ENCODE measurements at regions of chr1 and their contacts with region 1.

Region 1: DNA sequence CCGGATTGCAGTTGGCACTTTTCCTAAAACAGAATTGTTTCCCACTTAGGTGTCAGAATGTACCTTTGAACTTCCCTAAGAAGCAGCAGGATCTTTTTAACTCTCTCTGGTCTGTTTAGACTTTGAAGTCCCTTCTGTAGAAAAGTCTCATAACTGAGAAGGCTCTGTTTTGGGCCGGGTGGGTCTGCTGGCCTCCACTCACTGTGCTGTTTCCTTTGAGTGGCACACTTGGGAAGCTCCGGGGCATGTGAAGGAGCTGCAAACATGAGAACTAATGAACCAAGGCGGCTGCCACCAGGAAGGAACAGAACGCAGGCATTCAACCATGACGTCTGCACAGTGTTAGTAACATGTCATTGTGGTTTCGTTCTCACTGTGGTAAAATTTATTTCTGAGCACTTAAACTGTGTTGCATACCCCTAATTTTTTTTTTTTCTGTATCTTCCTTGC is 19.5 kb upstream of the NCMAP start:
- DNase-seq: peak; percentile 81
- ATAC-seq: peak; percentile 52
- H3K4me3 Mint-ChIP-seq: peak overlapping the region; percentile 76
- H3K27ac Mint-ChIP-seq: peak overlapping the region; percentile 99
- H3K4me1 Mint-ChIP-seq: peaks cover 85% of the 10 kb centered on the region
- H3K27me3 Mint-ChIP-seq: no peaks in the 10 kb centered on the region

Region 2: DNA sequence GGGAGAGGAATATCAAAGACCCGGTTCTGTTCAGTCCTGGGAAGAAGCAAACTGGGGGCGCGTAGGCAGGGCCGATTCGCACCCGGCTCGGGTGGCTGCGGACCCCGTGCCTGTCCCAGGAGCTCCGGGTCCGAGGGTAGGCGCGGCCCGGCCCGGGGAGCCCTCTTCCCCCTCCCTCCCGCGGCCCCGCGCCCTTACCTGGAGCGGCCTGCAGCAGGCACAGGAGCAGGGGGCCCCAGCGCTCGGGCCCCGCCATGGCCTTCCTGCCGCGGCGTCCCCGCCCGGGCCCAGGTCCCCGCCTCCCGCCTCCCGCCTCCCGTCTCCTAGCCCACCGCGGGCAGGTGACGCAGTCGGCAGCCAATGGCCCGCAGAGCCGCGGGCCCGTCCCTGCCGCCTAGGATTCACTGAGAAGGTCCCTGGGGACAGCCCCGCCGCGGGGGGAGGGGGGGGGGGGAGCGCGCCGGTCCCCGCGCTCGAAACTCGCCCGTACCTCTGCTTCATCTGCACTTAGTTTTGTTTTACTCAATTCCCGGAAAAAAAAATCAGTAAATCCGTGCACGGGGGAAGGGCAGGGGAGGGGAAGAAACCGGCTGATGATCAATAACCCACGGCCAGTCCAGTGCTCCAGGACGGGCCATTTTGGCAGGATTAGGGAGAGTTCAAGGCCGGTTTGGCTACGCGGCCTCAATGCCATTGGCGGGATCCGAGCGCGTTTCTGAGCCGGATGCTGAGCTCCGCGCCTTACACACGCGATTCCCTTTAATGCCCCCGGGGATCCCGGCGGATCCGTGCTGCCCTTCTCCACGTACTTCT is 349.2 kb before region 1 on chr1 and contains the start of gene IFNLR1:
- CTCF ChIA-PET with region 1: no interaction called
- POLR2A ChIA-PET with region 1: no interaction called
- intact Hi-C with region 1: loop called (anchors 1 to 5 kb)
- DNase-seq: peak; percentile 93
- ATAC-seq: peak; percentile 88
- H3K4me3 Mint-ChIP-seq: peak within 1 kb of the TSS; percentile 73
- H3K27ac Mint-ChIP-seq: peak within 1 kb of the TSS; percentile 71
- H3K4me1 Mint-ChIP-seq: peaks cover 47% of the 10 kb centered on the region
- H3K27me3 Mint-ChIP-seq: no peaks in the 10 kb centered on the region
- total RNA-seq, gene IFNLR1: 6.6 to 7.4 TPM

Region 3: DNA sequence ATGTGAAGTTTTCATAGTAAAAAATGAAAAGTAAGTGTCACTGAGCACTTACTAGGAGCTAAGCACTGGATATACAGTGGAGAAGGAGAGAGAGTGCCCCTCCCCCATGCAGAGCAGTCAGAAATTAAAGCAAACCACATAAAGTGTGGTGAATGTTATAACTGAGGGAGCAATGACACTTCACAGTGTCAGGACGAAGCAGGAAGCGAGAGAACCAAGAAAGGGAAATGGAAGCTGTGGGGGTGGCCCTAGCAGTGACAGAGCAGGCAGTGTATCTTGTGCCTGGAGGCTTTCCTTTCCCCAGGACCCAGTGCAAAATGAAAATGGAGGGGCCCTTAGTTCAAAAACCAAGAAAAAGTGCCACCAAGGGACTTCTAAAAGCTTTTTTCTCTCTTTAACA is 55.3 kb before region 1 on chr1:
- CTCF ChIA-PET with region 1: interaction called, 9 read pairs
- POLR2A ChIA-PET with region 1: interaction called, 7 read pairs
- intact Hi-C with region 1: loop called (anchors 1 to 2 kb)
- DNase-seq: peak; percentile 81
- ATAC-seq: peak; percentile 76
- H3K4me3 Mint-ChIP-seq: peak overlapping the region; percentile 60
- H3K27ac Mint-ChIP-seq: peak overlapping the region; percentile 97
- H3K4me1 Mint-ChIP-seq: peaks cover 65% of the 10 kb centered on the region
- H3K27me3 Mint-ChIP-seq: no peaks in the 10 kb centered on the region

Region 4: DNA sequence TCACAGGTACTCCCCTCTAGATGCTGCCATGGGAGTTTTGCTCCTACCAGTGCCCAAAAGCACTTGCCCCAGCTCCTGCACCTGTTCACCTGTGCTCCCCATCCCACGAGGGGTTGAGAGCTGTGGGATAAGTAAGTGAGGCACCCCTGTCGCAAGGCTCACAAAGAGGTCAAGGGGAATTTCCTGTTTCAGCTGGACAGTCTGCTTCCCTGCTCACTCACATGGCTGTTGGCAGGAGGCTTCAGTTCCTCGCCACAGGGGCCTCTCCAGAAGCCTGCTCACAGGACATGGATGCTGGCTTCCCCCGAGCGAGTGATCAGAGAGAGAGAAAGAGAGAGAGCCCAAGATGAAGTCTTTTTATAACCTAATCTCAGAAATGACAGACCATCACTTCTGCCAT is 10.8 kb after region 1 on chr1:
- CTCF ChIA-PET with region 1: interaction called, 3 read pairs
- POLR2A ChIA-PET with region 1: interaction called, 14 read pairs
- intact Hi-C with region 1: no loop called
- DNase-seq: no peak
- ATAC-seq: no peak
- H3K4me3 Mint-ChIP-seq: no peak overlapping the region
- H3K27ac Mint-ChIP-seq: no peak overlapping the region
- H3K4me1 Mint-ChIP-seq: peaks cover 24% of the 10 kb centered on the region
- H3K27me3 Mint-ChIP-seq: no peaks in the 10 kb centered on the region

Region 5: GRCh38 chr1:24919791-24920532 is 383.5 kb after region 1 on chr1:
- CTCF ChIA-PET with region 1: no interaction called
- POLR2A ChIA-PET with region 1: no interaction called
- intact Hi-C with region 1: loop called in 1 of 2 experiments (anchors 5 kb)
- DNase-seq: peak; percentile 90
- ATAC-seq: peak; percentile 38
- H3K4me3 Mint-ChIP-seq: peak overlapping the region; percentile 54
- H3K27ac Mint-ChIP-seq: peak overlapping the region; percentile 97
- H3K4me1 Mint-ChIP-seq: peaks cover 69% of the 10 kb centered on the region
- H3K27me3 Mint-ChIP-seq: no peaks in the 10 kb centered on the region

Region 6: DNA sequence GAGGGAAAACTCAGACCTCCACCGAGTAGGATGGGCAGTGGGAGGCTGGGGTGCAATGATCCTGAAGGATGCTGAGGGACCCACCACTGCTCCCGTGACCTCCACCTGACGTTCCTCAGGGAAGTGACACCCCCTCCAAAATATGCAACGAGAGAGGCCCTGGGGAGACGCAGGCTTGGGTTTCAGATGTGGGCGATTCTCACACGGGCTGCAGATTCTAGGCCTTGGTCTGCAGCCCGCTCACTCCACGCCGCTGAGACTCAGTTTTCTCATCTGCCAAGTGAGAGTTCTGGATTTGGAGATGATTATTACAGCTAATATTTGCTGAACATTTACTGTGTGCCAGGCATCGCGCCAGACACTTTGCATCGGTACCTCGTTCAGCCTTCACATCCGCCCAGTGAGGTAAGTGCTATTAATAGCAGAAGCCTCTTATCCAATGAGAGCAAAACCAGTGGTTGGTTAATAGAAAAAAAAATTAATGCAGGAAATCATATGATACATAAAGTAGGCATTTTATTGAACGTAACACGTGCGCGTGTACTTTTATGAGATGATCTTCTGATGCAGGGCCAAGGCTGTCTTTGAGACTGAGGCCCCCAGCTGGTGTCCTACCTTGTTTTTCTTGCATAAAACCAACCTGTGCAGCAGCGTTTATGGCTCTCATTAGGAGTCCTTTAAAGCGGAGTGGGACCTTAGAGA is 495.7 kb after region 1 on chr1:
- CTCF ChIA-PET with region 1: no interaction called
- POLR2A ChIA-PET with region 1: no interaction called
- intact Hi-C with region 1: loop called in 1 of 2 experiments (anchors 2 kb)
- DNase-seq: peak; percentile 70
- ATAC-seq: peak; percentile 25
- H3K4me3 Mint-ChIP-seq: no peak overlapping the region
- H3K27ac Mint-ChIP-seq: no peak overlapping the region
- H3K4me1 Mint-ChIP-seq: peaks cover 74% of the 10 kb centered on the region
- H3K27me3 Mint-ChIP-seq: no peaks in the 10 kb centered on the region

Measured in activated CD4-positive, alpha-beta T cell treated with anti-CD3 and anti-CD28 coated beads for 36 hours (primary cell).